ENCODE measurements at regions of chr12 and their contacts with region 1.

Region 1: GRCh38 chr12:48795480-48796455 is 6.9 kb upstream of the ADCY6 start:
- DNase-seq: peak; percentile 69
- H3K4me3 ChIP-seq: no peak overlapping the region
- H3K27ac ChIP-seq: no peak overlapping the region
- H3K4me1 ChIP-seq: peaks cover 11% of the 10 kb centered on the region
- H3K27me3 ChIP-seq: no peaks in the 10 kb centered on the region
- CTCF ChIP-seq: peak; percentile 97

Region 2: DNA sequence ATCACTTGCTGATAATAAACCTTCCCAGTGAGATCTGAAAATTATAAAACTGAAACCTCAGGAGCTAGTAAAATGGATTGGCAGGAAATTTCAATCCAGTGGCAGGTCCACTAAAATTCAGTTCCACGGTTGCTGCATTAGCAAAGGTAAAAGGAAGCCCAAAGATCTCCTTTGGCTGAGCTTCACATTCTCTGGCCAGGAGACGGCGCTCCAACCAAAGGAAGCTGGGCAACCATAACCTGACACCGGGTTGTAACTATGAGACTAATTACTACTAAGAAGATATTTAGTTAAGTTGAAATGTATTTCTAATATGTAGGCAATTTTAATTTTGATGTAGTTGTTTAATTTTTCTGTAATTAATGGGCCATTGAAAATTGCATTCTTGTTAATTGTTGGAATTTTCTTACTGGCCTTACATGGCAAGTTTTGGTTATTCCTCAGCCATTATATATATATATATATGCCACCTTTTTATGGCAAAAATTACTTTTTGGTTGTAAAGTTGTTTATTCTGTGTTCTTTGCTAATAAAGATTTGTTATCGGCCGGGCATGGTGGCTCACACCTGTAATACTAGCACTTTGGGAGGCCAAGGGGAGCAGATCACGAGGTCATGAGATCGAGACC is 253.4 kb before region 1 on chr12:
- CTCF ChIA-PET with region 1: no interaction called
- dilution Hi-C with region 1: no loop called
- in situ Hi-C with region 1: no loop called
- intact Hi-C with region 1: loop called (anchors 1 kb)
- DNase-seq: peak; percentile 42
- H3K4me3 ChIP-seq: no peak overlapping the region
- H3K27ac ChIP-seq: no peak overlapping the region
- H3K4me1 ChIP-seq: peaks cover 8% of the 10 kb centered on the region
- H3K27me3 ChIP-seq: no peaks in the 10 kb centered on the region
- CTCF ChIP-seq: peak; percentile 90 to 93

Region 3: GRCh38 chr12:48681738-48682532 is 113.8 kb before region 1 on chr12 and contains the start of gene KANSL2:
- CTCF ChIA-PET with region 1: no interaction called
- dilution Hi-C with region 1: loop called (anchors 5 kb)
- in situ Hi-C with region 1: no loop called
- intact Hi-C with region 1: loop called (anchors 2 kb)
- DNase-seq: peak; percentile 99
- H3K4me3 ChIP-seq: peak within 1 kb of the TSS; percentile 95 to 97 (median 95)
- H3K27ac ChIP-seq: peak within 1 kb of the TSS; percentile 82
- H3K4me1 ChIP-seq: peaks cover 32% of the 10 kb centered on the region
- H3K27me3 ChIP-seq: no peaks in the 10 kb centered on the region
- CTCF ChIP-seq: no peak
- total RNA-seq, gene KANSL2: 36.0 to 38.3 TPM

Region 4: DNA sequence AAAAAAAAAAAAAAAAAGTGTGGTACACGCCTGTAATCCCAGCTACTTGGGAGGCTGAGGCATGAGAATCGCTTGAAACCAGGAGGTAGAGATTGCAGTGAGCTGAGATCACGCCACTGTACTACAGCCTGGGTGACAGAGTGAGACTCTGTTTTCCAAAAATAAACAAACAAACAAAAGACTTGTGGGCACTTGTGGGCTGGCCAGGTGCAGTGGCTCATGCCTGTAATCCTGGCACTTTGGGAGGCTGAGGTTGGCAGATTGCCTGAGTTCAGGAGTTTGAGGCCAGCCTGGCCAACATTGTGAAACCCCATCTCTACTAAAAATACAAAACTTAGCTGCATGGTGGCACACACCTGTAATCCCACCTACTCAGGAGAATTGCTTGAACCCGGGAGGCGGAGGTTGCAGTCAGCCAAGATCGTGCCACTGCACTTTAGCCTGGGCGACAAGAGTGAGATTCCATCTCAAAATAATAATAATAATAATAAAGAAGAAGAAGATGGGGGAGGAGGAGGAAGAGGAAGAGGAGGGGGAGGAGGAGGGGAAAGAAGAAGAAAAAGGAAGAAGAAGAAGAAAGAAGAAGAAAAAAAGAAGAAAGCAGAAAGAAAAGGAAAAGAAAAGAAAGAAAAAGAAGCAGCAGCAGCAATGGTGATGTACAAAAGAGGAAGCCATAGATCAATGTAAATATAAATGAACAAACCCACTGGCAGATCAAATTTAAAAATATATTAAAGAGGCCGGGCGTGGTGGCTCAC is 51.3 kb before region 1 on chr12:
- CTCF ChIA-PET with region 1: no interaction called
- dilution Hi-C with region 1: no loop called
- in situ Hi-C with region 1: no loop called
- intact Hi-C with region 1: no loop called
- DNase-seq: no peak
- H3K4me3 ChIP-seq: no peak overlapping the region
- H3K27ac ChIP-seq: no peak overlapping the region
- H3K4me1 ChIP-seq: no peaks in the 10 kb centered on the region
- H3K27me3 ChIP-seq: no peaks in the 10 kb centered on the region
- CTCF ChIP-seq: no peak

Region 5: DNA sequence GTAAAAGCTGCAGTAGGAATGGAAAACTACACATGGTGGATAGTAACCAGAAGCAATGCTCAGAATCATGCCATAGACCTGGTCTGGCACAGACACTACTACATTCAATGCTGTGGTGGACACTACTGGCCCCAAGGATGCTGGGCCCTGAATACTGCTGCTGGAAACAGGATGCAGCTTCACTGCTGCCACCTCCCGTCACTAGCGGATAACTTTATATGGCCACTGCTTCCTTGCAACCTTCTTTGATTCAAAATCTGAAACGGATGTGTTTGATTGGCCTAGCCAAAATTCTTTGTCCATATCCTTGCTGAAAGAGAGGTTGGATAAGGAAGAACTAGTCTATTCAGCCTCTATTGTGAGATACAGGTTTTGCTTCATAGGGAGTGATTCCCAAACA is 37.5 kb before region 1 on chr12:
- CTCF ChIA-PET with region 1: interaction called, 35 read pairs
- dilution Hi-C with region 1: loop called (anchors 5 kb)
- in situ Hi-C with region 1: loop called (anchors 5 kb)
- intact Hi-C with region 1: loop called (anchors 1 kb)
- DNase-seq: no peak
- H3K4me3 ChIP-seq: no peak overlapping the region
- H3K27ac ChIP-seq: no peak overlapping the region
- H3K4me1 ChIP-seq: no peaks in the 10 kb centered on the region
- H3K27me3 ChIP-seq: no peaks in the 10 kb centered on the region
- CTCF ChIP-seq: no peak

Region 6: DNA sequence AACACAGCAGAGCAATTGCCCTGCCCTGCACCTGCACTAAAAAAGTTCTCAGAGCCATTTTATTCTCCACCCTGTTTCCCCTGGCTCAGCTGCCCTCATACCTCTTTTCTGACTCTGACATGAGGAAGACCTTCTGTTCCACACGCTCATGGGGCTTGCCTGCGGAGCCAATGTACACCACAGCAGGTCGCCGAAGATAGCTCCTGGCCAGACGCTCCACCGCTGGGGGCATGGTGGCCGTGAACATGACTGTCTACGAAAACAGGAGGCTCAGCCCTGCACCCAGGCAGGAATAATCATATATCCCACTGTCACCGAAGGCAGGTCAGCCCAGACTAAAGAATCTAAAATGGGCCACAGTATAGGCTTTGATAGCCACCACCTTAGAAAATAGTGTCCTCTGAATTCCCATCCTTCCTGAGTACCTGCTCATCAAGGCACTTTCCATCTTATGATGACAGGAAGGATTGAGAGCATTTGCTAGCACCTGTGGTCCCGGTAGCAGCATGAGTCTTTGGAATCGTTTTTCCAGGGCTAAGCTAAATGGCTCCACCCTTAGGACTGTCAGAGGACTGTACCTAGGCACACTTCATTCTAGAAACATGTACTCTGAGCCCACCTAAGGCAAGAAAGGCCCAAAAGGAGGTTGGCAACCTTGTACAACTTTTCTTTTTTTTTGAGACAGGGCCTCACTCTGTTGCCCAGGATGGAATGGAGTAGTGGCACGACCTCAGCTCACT is 36.7 kb after region 1 on chr12:
- CTCF ChIA-PET with region 1: interaction called, 10 read pairs
- dilution Hi-C with region 1: no loop called
- in situ Hi-C with region 1: no loop called
- intact Hi-C with region 1: no loop called
- DNase-seq: no peak
- H3K4me3 ChIP-seq: no peak overlapping the region
- H3K27ac ChIP-seq: no peak overlapping the region
- H3K4me1 ChIP-seq: no peaks in the 10 kb centered on the region
- H3K27me3 ChIP-seq: no peaks in the 10 kb centered on the region
- CTCF ChIP-seq: no peak

Measured in mammary epithelial cell (primary cell).